HEK293 (cell line): ENCODE measurements at regions of chr7 and their contacts with region 1.

Region 1: DNA sequence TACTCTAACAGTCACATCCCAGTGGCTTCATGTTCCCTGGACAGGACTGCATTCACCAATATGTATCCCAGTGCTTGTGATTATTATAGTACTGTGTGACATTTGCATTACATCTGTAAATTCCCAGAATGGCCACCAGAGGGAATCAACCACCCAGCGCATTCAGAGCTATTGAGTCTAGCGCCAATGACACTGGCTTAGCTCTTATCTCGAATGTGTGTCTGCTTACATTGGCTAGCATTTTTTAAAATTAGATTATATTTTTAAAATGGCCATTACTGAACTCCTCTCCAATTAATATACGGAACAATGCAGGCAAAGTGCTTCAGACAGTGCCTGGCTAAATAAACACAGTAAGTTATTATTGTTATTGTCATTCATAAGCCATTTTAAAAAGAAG is 36.3 kb downstream of the TRIL start:
- H3K4me3 ChIP-seq: no peak overlapping the region
- H3K27ac ChIP-seq: no peak overlapping the region
- H3K4me1 ChIP-seq: no peaks in the 10 kb centered on the region; the same call in 1 of the 2 replicates
- CTCF ChIP-seq: 0 out of 2 replicates have a peak, but pooled peaks have one; percentile 33

Region 2: DNA sequence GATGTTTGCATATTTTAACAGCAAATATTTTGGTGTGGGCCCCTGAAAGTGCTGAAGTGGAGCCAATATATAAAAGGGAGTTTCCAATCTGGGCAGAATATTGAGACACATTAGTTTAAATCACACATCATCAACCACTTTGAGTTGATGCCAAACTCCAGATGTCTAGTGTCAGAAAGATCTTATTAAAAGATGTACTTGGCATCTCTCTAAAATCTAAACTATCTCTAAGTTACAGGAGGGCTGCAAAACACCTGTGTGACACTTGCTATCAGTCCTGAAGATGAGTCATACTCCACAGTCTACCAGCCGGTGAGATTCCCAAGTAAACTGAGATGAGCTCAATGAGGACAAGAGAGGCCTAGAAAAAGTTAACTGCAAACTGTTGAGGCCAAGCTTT is 752.6 kb before region 1 on chr7:
- CTCF ChIA-PET with region 1: no interaction called
- POLR2A ChIA-PET with region 1: no interaction called
- H3K4me3 ChIP-seq: no peak overlapping the region
- H3K27ac ChIP-seq: no peak overlapping the region
- H3K4me1 ChIP-seq: peaks cover 11% of the 10 kb centered on the region; the same call in 1 of the 2 replicates
- CTCF ChIP-seq: no peak

Region 3: GRCh38 chr7:28890137-28890536 is 31.7 kb before region 1 on chr7:
- CTCF ChIA-PET with region 1: interaction called, 13 read pairs
- POLR2A ChIA-PET with region 1: no interaction called
- H3K4me3 ChIP-seq: no peak overlapping the region
- H3K27ac ChIP-seq: no peak overlapping the region
- H3K4me1 ChIP-seq: no peaks in the 10 kb centered on the region
- CTCF ChIP-seq: no peak

Region 4: GRCh38 chr7:28933846-28934320 is 12.1 kb after region 1 on chr7:
- CTCF ChIA-PET with region 1: interaction called, 61 read pairs
- POLR2A ChIA-PET with region 1: interaction called, 5 read pairs
- H3K4me3 ChIP-seq: no peak overlapping the region
- H3K27ac ChIP-seq: no peak overlapping the region
- H3K4me1 ChIP-seq: peaks cover 8% of the 10 kb centered on the region
- CTCF ChIP-seq: no peak

Region 5: GRCh38 chr7:28955718-28956619 is 34.1 kb after region 1 on chr7:
- CTCF ChIA-PET with region 1: interaction called, 86 read pairs
- POLR2A ChIA-PET with region 1: no interaction called
- H3K4me3 ChIP-seq: peak overlapping the region; percentile 66
- H3K27ac ChIP-seq: peak overlapping the region; percentile 85; the same call in 1 of the 2 replicates
- H3K4me1 ChIP-seq: no peaks in the 10 kb centered on the region
- CTCF ChIP-seq: peak; percentile 84

Region 6: GRCh38 chr7:29113384-29114103 is 191.7 kb after region 1 on chr7:
- CTCF ChIA-PET with region 1: interaction called, 210 read pairs
- POLR2A ChIA-PET with region 1: no interaction called
- H3K4me3 ChIP-seq: no peak overlapping the region
- H3K27ac ChIP-seq: no peak overlapping the region
- H3K4me1 ChIP-seq: peaks cover 4% of the 10 kb centered on the region
- CTCF ChIP-seq: peak; percentile 43; the same call in 1 of the 2 replicates

Region 7: DNA sequence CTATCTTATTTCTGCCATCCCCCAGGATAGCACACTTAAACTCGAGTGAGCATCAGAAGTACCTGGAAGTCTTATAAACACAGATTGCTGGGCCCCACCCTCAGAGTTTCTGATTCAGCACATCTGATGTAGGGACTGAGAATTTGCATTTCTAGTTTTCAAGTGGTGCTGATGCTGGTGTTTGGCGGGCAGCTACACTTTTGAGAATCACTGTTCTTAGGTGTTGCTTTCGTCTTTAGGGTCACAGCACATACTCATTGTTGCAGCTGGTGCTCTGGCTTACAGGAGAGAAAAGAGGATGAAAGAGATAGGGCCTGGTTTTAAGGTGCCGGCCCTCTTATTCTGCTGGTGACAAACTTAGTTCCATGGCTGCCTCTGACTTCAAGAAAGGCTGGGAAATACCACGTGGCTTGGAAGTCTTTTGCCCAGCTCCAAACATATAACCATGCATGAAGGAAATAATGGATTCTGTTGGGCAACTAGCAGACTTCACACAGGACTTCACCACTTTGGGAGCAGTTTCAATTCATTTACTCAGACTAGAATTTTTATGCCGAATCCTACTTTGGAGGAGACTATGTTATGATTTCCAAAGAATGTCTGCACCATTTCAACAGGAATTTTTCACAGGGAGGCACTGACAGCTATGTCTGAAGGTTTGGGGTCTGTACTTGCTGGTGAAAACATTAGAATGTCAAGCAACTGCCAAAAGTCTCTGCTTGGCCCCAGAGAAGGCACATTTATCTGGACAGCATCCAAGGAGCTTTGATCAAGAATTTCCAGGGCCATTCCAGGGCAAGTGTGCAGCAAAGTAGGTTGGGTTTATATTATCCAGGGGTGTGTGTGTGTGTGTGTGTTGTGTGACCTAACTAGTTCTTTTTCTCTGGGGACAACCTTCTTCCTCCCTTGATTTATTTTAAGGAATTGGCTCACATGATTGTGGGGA is 1842.5 kb after region 1 on chr7:
- CTCF ChIA-PET with region 1: no interaction called
- POLR2A ChIA-PET with region 1: no interaction called
- H3K4me3 ChIP-seq: no peak overlapping the region
- H3K27ac ChIP-seq: no peak overlapping the region
- H3K4me1 ChIP-seq: no peaks in the 10 kb centered on the region
- CTCF ChIP-seq: no peak